B cell (primary cell): ENCODE measurements at regions of chr14 and their contacts with region 1.

Region 1: DNA sequence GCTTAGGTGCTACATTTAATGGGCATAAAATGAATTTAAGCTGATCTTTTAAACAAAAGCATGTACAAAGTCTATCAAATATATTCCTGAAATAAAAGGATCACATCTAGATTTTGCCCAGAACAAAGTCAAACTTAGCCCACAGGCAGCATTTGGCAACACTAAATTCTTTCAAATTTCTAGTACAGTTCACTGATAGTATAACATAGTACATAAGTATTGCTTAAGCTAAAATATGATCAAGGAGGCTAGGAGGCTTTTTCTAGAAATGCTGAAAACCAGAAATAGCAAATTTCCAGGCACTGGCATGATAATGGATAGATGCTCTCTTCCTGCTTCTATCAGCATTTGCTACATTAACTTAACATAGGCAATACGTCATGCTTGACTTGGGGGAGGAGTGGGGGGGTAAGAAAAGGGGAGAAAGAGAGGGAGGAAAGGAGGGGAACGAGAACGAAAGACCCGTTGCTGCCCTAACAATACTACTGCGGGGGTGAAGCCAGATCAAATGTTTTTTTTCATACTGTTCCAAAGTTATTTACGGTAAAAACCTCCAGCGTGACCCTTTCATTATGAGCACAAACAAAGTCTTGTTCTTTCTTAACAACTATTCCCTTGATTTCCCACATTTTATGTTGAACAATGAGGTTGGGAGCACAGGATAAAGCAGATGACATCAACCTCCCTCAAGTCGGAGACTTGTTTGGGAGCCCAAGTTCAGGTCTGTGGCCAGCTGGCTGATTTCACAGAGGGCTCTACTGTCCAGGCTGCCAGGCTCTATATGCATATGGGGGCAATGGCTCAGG is 10.6 kb downstream of the TMED10 start:
- DNase-seq: no peak
- ATAC-seq: no peak
- H3K4me3 ChIP-seq: no peak overlapping the region
- H3K4me3 Mint-ChIP-seq: no peak overlapping the region
- H3K27ac ChIP-seq: no peak overlapping the region
- H3K27ac Mint-ChIP-seq: no peak overlapping the region
- H3K4me1 ChIP-seq: peaks cover 3% of the 10 kb centered on the region in 2 donors
- H3K4me1 Mint-ChIP-seq: peaks cover 40% of the 10 kb centered on the region
- H3K27me3 ChIP-seq: no peaks in the 10 kb centered on the region
- H3K27me3 Mint-ChIP-seq: no peaks in the 10 kb centered on the region
- CTCF ChIP-seq: no peak

Region 2: DNA sequence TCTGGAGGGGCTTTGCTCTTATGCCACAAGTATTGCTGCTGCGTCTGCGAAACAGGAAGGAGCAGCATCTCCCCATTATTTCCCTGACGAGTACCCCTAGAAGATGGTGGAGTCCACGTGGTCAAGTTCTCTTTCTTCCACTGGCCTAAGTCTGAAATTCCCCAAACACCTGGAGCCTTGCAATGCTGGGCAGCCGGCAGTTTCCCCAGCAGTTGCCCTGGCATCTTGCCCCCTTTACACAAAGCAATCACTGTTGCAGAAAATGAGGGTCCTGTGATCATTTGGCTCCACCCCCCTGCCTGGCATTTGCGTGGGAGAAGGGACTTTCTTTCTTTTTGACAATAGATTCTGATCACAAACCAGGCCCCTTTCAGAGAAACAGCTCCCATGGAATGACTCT is 169.8 kb after region 1 on chr14:
- CTCF ChIA-PET with region 1: no interaction called
- POLR2A ChIA-PET with region 1: interaction called, 12 read pairs
- intact Hi-C with region 1: no loop called
- DNase-seq: peak; percentile 20
- ATAC-seq: no peak
- H3K4me3 ChIP-seq: no peak overlapping the region
- H3K4me3 Mint-ChIP-seq: peak overlapping the region; percentile 48
- H3K27ac ChIP-seq: no peak overlapping the region
- H3K27ac Mint-ChIP-seq: no peak overlapping the region
- H3K4me1 ChIP-seq: peaks cover 11 to 19% of the 10 kb centered on the region in 2 donors
- H3K4me1 Mint-ChIP-seq: peaks cover 23% of the 10 kb centered on the region
- H3K27me3 ChIP-seq: peaks cover 0 to 2% (median 0%) of the 10 kb centered on the region in 4 experiments
- H3K27me3 Mint-ChIP-seq: no peaks in the 10 kb centered on the region
- CTCF ChIP-seq: no peak